ENCODE measurements at regions of chr11 and their contacts with region 1.

Region 1: GRCh38 chr11:69211920-69212571 is 56.3 kb downstream of the SMIM38 start:
- DNase-seq: no peak
- ATAC-seq: no peak

Region 2: DNA sequence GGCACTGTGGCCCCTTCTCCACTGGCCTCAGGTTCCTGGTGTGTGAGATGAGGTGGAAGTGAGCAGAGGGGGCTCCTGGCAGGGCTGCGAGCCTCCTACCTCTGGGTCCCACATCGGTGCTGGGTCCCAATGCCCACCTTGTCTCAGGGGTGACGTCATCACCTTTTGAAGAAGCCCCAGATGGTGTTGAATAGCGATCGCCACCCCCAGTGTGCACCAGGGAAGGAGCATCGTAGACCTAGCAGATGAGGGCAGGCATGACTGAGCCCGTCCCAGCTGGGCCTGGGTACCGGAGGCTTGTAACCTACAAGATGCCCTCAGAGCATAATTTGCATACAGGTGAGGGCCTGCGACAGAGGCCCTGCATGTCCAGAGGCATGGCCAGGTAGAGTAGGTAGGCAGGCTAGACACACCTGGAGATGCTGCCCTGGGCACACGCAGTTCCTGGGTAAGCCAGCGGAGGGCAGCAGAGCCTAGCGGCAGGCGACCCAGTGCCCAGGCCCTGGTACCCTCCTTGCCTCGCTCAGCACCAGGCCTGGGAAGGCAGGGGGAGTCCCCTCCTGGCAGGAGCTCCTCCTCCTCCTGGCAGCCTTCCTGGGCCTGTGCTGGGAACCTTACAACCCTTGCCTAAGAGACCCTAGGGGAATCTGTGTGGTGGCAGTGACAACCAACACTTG is 110.8 kb before region 1 on chr11:
- intact Hi-C with region 1: no loop called
- DNase-seq: peak; percentile 83
- ATAC-seq: peak; percentile 89 to 91

Region 3: GRCh38 chr11:69131644-69132300 is 80.3 kb before region 1 on chr11:
- intact Hi-C with region 1: loop called in 1 of 2 experiments (anchors 5 kb)
- DNase-seq: peak; percentile 67
- ATAC-seq: peak; percentile 79 to 86

Region 4: DNA sequence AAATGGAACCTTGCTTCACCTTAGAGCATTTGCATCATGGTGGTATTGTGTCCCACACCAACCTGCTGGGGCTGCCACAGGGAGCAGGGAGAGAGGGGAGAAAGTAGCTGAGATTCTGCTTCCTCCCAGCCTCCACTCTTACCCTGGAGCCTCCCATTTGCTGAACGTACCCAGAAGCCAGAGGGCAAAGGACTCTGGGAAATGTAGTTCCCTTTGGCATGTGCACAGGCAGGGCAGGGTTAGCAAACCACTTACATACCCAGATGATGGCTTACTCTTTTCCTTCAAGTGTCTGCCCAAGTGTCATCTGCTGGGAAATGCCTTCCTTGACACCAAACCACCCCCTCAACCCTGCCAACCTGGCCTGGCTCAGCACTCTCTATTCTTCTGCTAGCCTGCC is 39.4 kb before region 1 on chr11:
- intact Hi-C with region 1: no loop called
- DNase-seq: no peak
- ATAC-seq: no peak

Region 5: GRCh38 chr11:69374110-69374945 is 162.3 kb after region 1 on chr11:
- intact Hi-C with region 1: no loop called
- DNase-seq: no peak
- ATAC-seq: peak in 1 of 2 donors; percentile 30

Measured in left cardiac atrium (tissue), 4 donors.